Right ventricle myocardium superior (tissue), 1 donor: ENCODE measurements at regions of chr12 and their contacts with region 1.

Region 1: GRCh38 chr12:59776482-59776881 is 180.7 kb downstream of the SLC16A7 start:
- DNase-seq: no peak
- ATAC-seq: no peak

Region 2: DNA sequence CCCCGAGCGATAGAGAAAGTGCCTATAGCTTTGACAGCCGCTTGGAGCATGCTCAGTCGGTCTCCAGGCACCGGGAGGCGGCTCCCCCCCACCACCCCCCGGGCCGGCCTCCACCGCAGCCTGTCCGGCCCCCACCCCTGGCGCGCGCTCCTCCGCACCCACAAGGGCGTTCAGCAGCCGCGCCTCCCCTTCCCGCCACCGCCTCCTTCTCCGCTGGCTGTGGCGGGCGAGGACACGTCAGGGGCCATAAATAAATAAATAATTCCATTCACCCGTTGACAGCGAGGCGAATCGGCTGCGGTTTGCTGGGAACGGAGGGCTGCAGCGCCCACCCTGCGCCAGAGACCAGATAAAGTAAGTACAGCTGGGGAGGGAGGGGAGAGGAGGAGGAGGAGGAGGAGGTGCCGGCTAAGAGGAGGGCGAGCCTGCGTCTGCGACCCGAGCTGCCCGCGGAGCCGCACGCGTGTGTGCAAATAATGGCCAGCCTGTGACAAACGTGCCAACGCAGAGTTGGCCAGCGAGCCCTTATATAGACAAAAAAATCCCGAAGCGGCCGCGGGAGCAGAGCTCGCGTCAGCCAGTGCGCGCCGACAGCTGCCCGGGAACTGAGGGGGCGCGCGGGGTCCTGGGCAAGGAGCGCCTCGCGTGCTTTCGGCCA is 180.5 kb before region 1 on chr12 and contains the start of gene SLC16A7:
- intact Hi-C with region 1: loop called (anchors 10 kb)
- DNase-seq: peak; percentile 94
- ATAC-seq: peak; percentile 87
- total RNA-seq, gene SLC16A7: 108 TPM